A673 (cell line): ENCODE measurements at regions of chrX and their contacts with region 1.

Region 1: GRCh38 chrX:43750248-43750676 is 94.2 kb downstream of the MAOA start:
- DNase-seq: peak; percentile 82
- H3K4me3 ChIP-seq: no peak overlapping the region
- H3K27ac ChIP-seq: no peak overlapping the region
- H3K4me1 ChIP-seq: no peaks in the 10 kb centered on the region
- H3K27me3 ChIP-seq: no peaks in the 10 kb centered on the region
- CTCF ChIP-seq: peak; percentile 69

Region 2: GRCh38 chrX:43349363-43349762 is 400.9 kb before region 1 on chrX:
- CTCF ChIA-PET with region 1: no interaction called
- POLR2A ChIA-PET with region 1: no interaction called
- intact Hi-C with region 1: loop called (anchors 5 kb)
- DNase-seq: peak; percentile 71
- H3K4me3 ChIP-seq: no peak overlapping the region
- H3K27ac ChIP-seq: no peak overlapping the region
- H3K4me1 ChIP-seq: no peaks in the 10 kb centered on the region
- H3K27me3 ChIP-seq: no peaks in the 10 kb centered on the region
- CTCF ChIP-seq: peak; percentile 82